ENCODE measurements at regions of chr4 and their contacts with region 1.

Region 1: DNA sequence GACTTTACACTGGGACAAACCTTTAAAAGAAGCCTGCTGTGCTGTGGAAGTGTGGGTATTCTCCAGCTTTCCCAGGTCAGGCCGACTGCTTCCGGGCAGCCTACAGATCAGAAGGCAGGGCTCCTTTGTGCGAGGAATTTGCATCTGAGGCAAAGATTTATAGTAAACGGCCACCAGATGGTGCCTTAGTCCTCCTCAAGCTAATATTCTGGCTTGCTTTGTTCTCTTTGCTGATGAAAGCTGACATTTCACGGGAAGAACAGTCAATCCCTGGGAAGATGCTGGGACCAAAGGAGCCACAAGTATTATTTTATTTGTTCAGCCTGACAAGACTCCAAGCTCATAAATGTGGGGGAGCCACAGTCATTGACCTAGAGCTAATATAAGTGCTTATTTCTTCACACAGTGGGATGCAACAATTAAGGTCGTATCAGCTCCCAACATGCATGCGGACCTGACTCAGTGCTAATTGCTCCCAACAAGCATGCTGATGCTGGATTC is 120.7 kb upstream of the TRIM2 start:
- DNase-seq: peak; percentile 31
- H3K4me3 ChIP-seq: no peak overlapping the region
- H3K27me3 ChIP-seq: peaks cover 1% of the 10 kb centered on the region
- CTCF ChIP-seq: peak; percentile 67

Region 2: DNA sequence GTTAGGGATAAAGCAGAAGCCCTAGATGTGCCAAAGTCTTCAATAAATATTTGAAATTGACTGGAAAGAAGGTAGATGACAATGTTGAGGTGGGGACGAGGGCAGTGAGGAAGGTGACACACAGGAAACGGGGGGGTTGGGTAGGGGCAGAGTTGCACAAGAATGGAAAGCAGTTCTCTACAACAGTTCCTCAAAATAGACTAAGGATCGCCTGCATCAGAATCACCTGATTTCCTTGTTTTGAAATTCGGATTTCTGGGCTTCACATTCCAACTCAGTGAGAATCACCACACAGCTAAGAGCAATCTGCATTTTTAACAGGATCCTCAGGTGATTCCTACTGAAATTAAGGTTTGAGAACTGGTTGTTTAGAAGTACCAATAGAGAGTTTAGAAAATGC is 233.1 kb before region 1 on chr4:
- CTCF ChIA-PET with region 1: interaction called, 72 read pairs
- POLR2A ChIA-PET with region 1: no interaction called
- DNase-seq: no peak
- H3K4me3 ChIP-seq: no peak overlapping the region
- H3K27me3 ChIP-seq: no peaks in the 10 kb centered on the region
- CTCF ChIP-seq: no peak

Region 3: GRCh38 chr4:153107246-153107645 is 23.7 kb after region 1 on chr4:
- CTCF ChIA-PET with region 1: interaction called, 34 read pairs
- POLR2A ChIA-PET with region 1: no interaction called
- DNase-seq: no peak
- H3K4me3 ChIP-seq: no peak overlapping the region
- H3K27me3 ChIP-seq: peaks cover 11% of the 10 kb centered on the region
- CTCF ChIP-seq: no peak

Region 4: DNA sequence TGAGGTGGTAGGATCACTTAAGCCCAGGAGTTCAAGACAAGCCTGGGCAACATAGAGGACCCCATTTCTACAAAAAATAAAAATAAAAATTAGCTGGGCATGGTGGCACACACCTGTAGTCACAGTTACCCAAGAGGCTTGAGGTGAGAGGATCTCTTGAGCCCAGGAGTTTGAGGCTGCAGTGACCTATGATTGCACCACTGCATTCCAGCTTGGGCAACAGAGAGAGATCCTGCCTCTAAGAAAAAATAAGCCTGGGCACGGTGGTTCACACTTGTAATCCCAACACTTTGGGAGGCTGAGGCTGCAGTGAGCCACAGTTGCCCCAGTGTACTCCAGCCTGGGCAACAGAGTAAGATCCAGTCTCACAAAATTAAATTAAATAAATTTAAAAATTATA is 38.5 kb after region 1 on chr4:
- CTCF ChIA-PET with region 1: interaction called, 189 read pairs
- POLR2A ChIA-PET with region 1: no interaction called
- DNase-seq: no peak
- H3K4me3 ChIP-seq: no peak overlapping the region
- H3K27me3 ChIP-seq: no peaks in the 10 kb centered on the region
- CTCF ChIP-seq: no peak

Measured in BJ (cell line).